ENCODE measurements at regions of chr12 and their contacts with region 1.

Region 1: GRCh38 chr12:116737774-116738700 is at the starts of genes RNFT2 and SPRING1:
- DNase-seq: peak; percentile 99
- H3K4me3 ChIP-seq: peak within 1 kb of the TSS; percentile 63 to 94 (median 80)
- H3K27ac ChIP-seq: peak within 1 kb of the TSS; percentile 33
- H3K4me1 ChIP-seq: peaks cover 5% of the 10 kb centered on the region
- H3K27me3 ChIP-seq: no peaks in the 10 kb centered on the region
- CTCF ChIP-seq: no peak
- total RNA-seq, gene RNFT2: 2.0 to 3.0 TPM
- total RNA-seq, gene SPRING1: 31.2 to 45.0 TPM

Region 2: GRCh38 chr12:116910645-116911451 is 172.8 kb after region 1 on chr12 and contains the start of gene FBXW8:
- CTCF ChIA-PET with region 1: no interaction called
- dilution Hi-C with region 1: no loop called
- in situ Hi-C with region 1: no loop called
- intact Hi-C with region 1: loop called (anchors 5 kb)
- DNase-seq: peak; percentile 54
- H3K4me3 ChIP-seq: peak within 1 kb of the TSS; percentile 50 to 89 (median 61)
- H3K27ac ChIP-seq: peak within 1 kb of the TSS; percentile 43
- H3K4me1 ChIP-seq: peaks cover 13% of the 10 kb centered on the region
- H3K27me3 ChIP-seq: peaks cover 2% of the 10 kb centered on the region
- CTCF ChIP-seq: no peak
- total RNA-seq, gene FBXW8: 10.7 to 12.8 TPM

Region 3: GRCh38 chr12:117105902-117106301 is 367.9 kb after region 1 on chr12:
- CTCF ChIA-PET with region 1: no interaction called
- dilution Hi-C with region 1: no loop called
- in situ Hi-C with region 1: no loop called
- intact Hi-C with region 1: no loop called
- DNase-seq: peak; percentile 94
- H3K4me3 ChIP-seq: no peak overlapping the region
- H3K27ac ChIP-seq: no peak overlapping the region
- H3K4me1 ChIP-seq: no peaks in the 10 kb centered on the region
- H3K27me3 ChIP-seq: peaks cover 15% of the 10 kb centered on the region
- CTCF ChIP-seq: no peak

Measured in mammary epithelial cell (primary cell).